PC-9 (cell line): ENCODE measurements at regions of chr1 and their contacts with region 1.

Region 1: DNA sequence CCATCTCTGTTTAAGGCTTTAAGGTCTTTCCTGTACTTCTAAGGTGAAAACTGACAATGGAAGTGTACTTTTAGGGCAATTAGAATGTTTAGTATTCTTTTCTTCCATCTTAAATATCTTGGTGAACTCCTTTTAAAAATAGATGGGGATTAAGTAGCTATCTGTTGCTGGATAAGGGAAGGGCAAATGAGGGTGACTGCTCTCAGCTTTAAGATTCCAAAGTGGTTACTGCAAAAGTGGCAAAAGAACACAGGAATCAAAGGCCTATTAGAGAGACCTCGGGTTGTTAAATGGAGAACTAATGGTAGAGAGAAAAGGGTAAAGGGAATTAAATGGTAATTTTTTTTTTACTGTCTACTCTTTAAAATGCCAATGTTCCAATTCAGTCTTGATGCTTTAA is 774.1 kb upstream of the B3GALT2 start:
- DNase-seq: no peak
- H3K4me3 ChIP-seq: no peak overlapping the region
- H3K27ac ChIP-seq: no peak overlapping the region
- H3K4me1 ChIP-seq: no peaks in the 10 kb centered on the region
- H3K27me3 ChIP-seq: no peaks in the 10 kb centered on the region
- CTCF ChIP-seq: no peak

Region 2: DNA sequence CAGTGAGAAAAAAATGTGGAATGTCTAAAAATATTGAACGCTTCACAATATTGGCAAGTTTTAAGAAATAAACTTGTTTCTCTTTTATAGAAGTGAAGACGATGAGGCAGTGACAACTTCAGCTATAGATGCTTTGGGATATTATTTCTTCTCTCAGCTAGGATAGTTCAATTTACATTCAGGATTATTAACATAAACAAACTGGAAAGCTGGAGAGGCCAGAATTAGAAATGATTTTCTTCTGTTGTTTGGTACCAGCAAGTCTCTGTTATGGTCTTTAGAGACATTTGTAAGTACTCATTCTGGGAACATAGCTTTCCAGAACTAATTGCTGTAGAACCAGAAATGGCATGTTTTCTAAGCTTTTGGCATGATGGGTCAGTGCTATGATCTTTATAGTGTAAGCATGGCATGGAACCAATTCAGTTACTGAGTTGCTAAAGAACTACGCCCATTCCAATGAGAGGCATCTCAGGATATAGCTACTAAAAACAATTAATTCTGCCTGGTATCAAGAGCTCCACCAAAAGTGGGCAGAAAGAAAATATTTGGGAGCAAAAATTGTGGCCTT is 174.6 kb before region 1 on chr1:
- CTCF ChIA-PET with region 1: no interaction called
- POLR2A ChIA-PET with region 1: no interaction called
- intact Hi-C with region 1: no loop called
- DNase-seq: no peak
- H3K4me3 ChIP-seq: no peak overlapping the region
- H3K27ac ChIP-seq: no peak overlapping the region
- H3K4me1 ChIP-seq: no peaks in the 10 kb centered on the region
- H3K27me3 ChIP-seq: no peaks in the 10 kb centered on the region
- CTCF ChIP-seq: no peak

Region 3: GRCh38 chr1:193926956-193927355 is 33.5 kb before region 1 on chr1:
- CTCF ChIA-PET with region 1: no interaction called
- POLR2A ChIA-PET with region 1: no interaction called
- intact Hi-C with region 1: no loop called
- DNase-seq: no peak
- H3K4me3 ChIP-seq: no peak overlapping the region
- H3K27ac ChIP-seq: no peak overlapping the region
- H3K4me1 ChIP-seq: no peaks in the 10 kb centered on the region
- H3K27me3 ChIP-seq: no peaks in the 10 kb centered on the region
- CTCF ChIP-seq: no peak

Region 4: DNA sequence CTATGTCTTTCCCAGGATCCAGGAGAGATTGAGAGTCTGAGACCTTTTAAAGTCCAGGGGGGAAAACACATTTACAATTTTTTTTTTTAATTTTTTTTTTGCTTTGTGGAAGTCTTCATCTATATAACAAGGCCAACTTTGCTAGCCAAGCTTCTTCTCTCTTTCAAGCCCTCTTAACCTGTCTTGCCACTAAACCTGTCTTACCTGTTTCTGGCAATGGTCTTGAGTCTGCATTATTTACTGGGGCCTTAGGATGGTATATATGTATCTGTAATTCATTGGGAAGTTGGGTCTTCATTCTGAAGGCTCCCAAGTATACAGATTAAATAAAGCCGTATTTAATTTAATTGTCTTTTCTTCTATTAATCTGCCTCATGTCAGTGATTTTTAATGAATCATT is 23.2 kb before region 1 on chr1:
- CTCF ChIA-PET with region 1: no interaction called
- POLR2A ChIA-PET with region 1: no interaction called
- intact Hi-C with region 1: loop called (anchors 2 kb)
- DNase-seq: no peak
- H3K4me3 ChIP-seq: no peak overlapping the region
- H3K27ac ChIP-seq: no peak overlapping the region
- H3K4me1 ChIP-seq: no peaks in the 10 kb centered on the region
- H3K27me3 ChIP-seq: no peaks in the 10 kb centered on the region
- CTCF ChIP-seq: no peak

Region 5: GRCh38 chr1:194322751-194323150 is 362.3 kb after region 1 on chr1:
- CTCF ChIA-PET with region 1: no interaction called
- POLR2A ChIA-PET with region 1: no interaction called
- intact Hi-C with region 1: no loop called
- DNase-seq: no peak
- H3K4me3 ChIP-seq: no peak overlapping the region
- H3K27ac ChIP-seq: no peak overlapping the region
- H3K4me1 ChIP-seq: no peaks in the 10 kb centered on the region
- H3K27me3 ChIP-seq: no peaks in the 10 kb centered on the region
- CTCF ChIP-seq: no peak